Esophagus squamous epithelium (tissue), 5 donors: ENCODE measurements at regions of chr14 and their contacts with region 1.

Region 1: DNA sequence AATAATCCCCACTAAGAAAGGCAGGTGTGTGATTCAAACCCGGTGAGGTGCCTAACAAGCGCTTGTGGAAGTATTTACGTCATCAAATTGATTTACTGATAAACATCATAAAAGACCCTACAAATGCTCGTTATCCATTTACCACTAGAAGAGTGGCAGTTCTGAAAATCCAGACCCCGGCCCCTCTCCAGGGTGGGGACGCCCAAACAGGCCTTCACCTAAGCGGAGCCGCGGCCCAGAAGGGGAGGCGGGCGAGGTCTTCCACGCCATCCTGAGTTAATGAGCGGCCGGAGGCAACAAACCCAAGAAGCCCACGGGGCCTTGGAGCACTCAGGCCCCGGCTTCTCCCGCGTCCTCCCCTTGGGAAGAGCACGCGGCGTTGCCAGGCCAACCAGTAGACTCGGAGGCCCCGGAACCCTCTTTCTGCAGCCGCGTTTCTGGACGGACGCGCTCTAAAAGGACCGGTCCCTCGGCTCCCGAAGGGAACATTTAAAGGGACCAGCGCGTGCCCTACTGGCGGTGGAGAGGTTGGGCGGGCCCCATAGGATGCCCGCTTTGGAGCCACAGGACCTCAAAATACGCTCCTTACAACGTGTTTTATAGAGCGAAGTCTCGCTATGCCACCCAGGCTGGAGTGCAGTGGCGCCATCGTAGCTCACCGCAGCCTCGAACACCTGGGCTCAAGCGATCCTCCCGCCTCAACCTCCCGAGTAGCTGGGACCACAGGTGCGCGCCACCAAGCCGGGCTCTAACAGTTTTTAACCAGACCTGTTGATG is 3.5 kb downstream of the PTPN21 start:
- DNase-seq: no peak
- H3K4me3 ChIP-seq: peak overlapping the region; percentile 38 to 72 (median 64)
- H3K27ac ChIP-seq: peak overlapping the region; percentile 56 to 81 (median 78)
- H3K4me1 ChIP-seq: peaks cover 7 to 54% (median 9%) of the 10 kb centered on the region in 3 donors
- H3K27me3 ChIP-seq: peaks cover 0 to 3% (median 0%) of the 10 kb centered on the region in 4 donors
- CTCF ChIP-seq: peak in 5 of 6 experiments; percentile 12 to 68 (median 40)
- POLR2A ChIP-seq: peak in 1 of 4 donors; percentile 27

Region 2: DNA sequence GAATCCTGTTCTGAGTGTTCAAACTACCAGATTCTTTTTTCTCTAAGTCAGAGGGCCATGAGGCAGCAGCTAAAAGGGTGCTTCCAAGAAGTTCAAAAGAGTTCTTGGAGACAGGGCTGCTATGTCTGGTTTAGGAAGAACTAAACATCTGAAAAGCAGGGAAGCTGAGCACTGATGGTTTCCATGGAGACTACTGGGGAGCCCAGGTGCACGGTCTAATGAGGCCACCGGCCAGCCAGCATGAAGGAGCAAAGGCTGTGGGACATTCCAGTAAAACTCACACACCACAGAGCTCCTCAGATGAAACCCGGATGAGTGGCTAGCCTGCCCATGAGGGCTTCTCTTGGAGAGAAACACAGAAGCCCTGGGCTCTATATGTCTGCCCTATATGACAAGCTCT is 325.6 kb before region 1 on chr14:
- intact Hi-C with region 1: no loop called
- DNase-seq: no peak
- H3K4me3 ChIP-seq: no peak overlapping the region
- H3K27ac ChIP-seq: no peak overlapping the region
- H3K4me1 ChIP-seq: no peaks in the 10 kb centered on the region
- H3K27me3 ChIP-seq: no peaks in the 10 kb centered on the region
- CTCF ChIP-seq: no peak
- POLR2A ChIP-seq: no peak

Region 3: DNA sequence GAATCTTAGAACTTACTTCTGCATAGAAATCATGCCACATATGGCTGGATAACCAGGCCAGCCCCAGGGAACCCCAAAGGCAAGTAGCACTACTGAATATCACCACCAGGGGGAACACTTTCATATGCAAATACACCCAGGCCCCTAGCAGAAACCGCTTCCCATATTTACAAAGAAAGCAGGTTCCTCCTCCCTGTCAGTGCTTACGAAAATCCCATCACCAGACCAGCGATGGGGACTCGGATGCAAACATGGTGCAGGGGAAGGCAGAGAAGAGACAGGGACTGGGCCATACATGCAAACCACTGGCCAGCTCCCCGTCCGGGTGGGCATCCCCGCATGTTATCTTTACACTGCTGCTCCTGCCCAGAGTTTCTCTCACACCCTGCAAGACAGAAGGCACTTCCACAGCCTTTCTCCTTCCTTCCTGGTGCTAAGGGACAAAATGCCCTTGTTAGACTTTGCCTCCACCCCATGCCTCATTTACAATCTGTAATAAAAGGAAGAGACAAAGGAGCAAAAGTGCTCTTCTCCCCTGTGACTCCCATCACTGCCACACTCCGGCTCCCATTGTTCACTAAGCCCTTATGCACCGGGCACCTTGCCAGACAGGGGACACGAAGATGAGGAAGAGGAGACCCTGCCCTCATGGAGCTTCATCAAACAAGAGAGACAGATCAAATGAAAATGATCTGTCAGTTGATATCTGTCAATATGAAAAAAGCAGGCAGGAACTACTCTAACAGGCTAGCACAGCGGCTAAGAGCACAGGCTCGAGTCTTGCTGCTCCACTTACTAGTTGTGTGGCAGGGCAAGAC is 58.8 kb before region 1 on chr14:
- intact Hi-C with region 1: loop called (anchors 10 kb)
- DNase-seq: peak; percentile 3
- H3K4me3 ChIP-seq: no peak overlapping the region
- H3K27ac ChIP-seq: no peak overlapping the region
- H3K4me1 ChIP-seq: peaks cover 0 to 24% (median 3%) of the 10 kb centered on the region in 3 donors
- H3K27me3 ChIP-seq: no peaks in the 10 kb centered on the region
- CTCF ChIP-seq: peak; percentile 80 to 92 (median 86)
- POLR2A ChIP-seq: no peak